Ascending aorta (tissue), 2 donors: ENCODE measurements at regions of chr19 and their contacts with region 1.

Region 1: GRCh38 chr19:6110360-6110977 is at the start of gene RFX2:
- DNase-seq: peak; percentile 98 to 100
- H3K4me3 ChIP-seq: peak within 1 kb of the TSS; percentile 95 to 97
- H3K27ac ChIP-seq: peak within 1 kb of the TSS; percentile 90 to 94
- H3K4me1 ChIP-seq: peaks cover 3 to 4% of the 10 kb centered on the region in 2 donors
- H3K27me3 ChIP-seq: no peaks in the 10 kb centered on the region
- CTCF ChIP-seq: no peak
- total RNA-seq, gene RFX2: 107 TPM

Region 2: DNA sequence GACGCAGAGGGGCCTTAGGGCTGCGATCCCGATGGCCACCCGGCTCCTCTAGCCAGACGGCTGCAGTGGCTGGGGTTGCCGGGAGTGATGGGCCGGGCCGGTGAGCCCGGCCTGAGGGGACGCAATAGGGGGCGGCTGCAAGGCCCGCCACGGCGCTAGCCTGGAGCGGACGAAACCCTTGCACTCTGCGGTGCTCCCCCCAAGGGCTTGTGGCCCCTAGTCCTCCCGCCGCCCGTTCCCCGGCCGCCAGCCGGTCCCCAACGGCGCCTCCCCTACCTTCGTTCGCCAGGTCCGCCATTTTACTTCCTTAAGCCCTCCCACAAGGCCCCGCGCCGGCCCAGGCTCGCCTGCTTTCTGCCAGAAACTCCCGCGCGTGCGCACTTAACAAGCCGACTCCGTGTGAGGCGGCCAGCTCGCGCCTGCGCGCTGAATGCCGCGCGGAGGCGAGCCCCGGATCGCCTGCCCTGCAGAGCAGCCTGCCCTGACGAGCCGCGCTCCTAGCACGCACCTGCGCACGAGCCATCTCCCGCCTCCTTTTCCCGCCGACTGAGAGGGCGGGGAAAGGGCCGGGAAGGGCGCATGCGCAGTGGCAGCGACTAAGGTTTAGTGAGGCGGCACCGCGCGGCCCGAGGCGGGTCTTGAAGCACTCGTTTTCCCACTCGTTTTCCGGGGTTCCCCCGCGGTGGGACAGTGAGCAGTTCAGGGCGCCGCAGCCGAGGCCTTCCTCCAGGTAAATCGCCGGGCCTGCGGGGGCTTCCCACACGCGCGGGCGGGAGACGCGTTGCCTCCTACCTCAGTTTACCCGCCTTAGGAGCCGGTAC is 132.5 kb before region 1 on chr19 and contains the start of gene RANBP3:
- intact Hi-C with region 1: loop called (anchors 5 kb)
- DNase-seq: peak; percentile 95 to 99
- H3K4me3 ChIP-seq: peak within 1 kb of the TSS; percentile 84 to 97
- H3K27ac ChIP-seq: peak within 1 kb of the TSS; percentile 87 to 96
- H3K4me1 ChIP-seq: peaks cover 18 to 35% of the 10 kb centered on the region in 2 donors
- H3K27me3 ChIP-seq: no peaks in the 10 kb centered on the region
- CTCF ChIP-seq: no peak
- total RNA-seq, gene RANBP3: 48.0 TPM

Region 3: DNA sequence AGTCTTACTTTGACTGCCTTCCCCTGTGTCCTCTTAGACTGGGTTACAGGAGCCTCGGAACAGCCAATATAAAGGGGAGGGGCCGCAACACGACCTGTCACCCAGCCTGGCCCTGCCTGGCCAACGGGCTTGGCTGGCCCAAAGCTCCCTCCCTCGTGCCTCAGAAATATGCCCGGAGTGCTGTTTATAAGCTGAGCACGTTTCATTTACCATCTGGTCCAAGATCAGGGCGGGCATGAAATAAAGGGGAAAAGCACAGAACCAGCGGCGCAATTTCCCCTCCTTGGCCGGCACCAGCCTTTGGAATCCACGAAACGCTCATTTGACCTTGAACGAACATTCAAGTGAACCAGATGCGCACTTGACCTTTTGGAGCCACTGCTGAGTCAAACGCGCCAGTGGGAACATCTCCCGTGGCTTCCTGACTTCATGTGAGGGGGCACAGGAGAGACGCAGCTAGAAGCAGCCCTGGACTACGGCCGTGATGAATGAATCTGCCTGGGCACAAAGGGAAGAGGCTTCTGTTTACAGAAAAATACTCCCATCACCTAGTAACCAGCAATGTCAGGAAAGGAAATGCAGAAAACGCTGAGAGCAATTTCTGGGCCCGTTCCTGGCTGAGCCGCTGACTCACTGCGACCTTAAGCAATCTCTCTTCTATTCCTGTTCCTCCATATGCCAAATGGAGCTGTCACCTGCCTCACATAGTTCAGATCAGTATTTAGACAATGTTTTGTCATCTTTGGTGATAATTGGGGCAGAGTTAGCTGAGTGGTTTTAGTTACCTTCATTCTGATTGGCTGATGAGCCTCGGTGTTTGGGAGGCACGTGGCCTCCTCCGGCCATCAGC is 53.4 kb before region 1 on chr19:
- intact Hi-C with region 1: loop called (anchors 1 kb)
- DNase-seq: peak; percentile 67 to 94
- H3K4me3 ChIP-seq: peak overlapping the region; percentile 28 to 47
- H3K27ac ChIP-seq: peak overlapping the region; percentile 93 to 96
- H3K4me1 ChIP-seq: peaks cover 15 to 55% of the 10 kb centered on the region in 2 donors
- H3K27me3 ChIP-seq: no peaks in the 10 kb centered on the region
- CTCF ChIP-seq: no peak

Region 4: GRCh38 chr19:6066661-6067646 is 43.5 kb before region 1 on chr19:
- intact Hi-C with region 1: loop called (anchors 2 kb)
- DNase-seq: peak; percentile 71 to 98
- H3K4me3 ChIP-seq: peak overlapping the region in 1 of 2 donors; percentile 5
- H3K27ac ChIP-seq: peak overlapping the region; percentile 76 to 85
- H3K4me1 ChIP-seq: peaks cover 17 to 75% of the 10 kb centered on the region in 2 donors
- H3K27me3 ChIP-seq: no peaks in the 10 kb centered on the region
- CTCF ChIP-seq: no peak

Region 5: GRCh38 chr19:6092329-6093286 is 17.9 kb before region 1 on chr19:
- intact Hi-C with region 1: loop called (anchors 2 kb)
- DNase-seq: peak; percentile 75 to 95
- H3K4me3 ChIP-seq: peak overlapping the region; percentile 6 to 59
- H3K27ac ChIP-seq: peak overlapping the region; percentile 88 to 92
- H3K4me1 ChIP-seq: peaks cover 18 to 35% of the 10 kb centered on the region in 2 donors
- H3K27me3 ChIP-seq: no peaks in the 10 kb centered on the region
- CTCF ChIP-seq: peak in 1 of 3 experiments; percentile 10

Region 6: DNA sequence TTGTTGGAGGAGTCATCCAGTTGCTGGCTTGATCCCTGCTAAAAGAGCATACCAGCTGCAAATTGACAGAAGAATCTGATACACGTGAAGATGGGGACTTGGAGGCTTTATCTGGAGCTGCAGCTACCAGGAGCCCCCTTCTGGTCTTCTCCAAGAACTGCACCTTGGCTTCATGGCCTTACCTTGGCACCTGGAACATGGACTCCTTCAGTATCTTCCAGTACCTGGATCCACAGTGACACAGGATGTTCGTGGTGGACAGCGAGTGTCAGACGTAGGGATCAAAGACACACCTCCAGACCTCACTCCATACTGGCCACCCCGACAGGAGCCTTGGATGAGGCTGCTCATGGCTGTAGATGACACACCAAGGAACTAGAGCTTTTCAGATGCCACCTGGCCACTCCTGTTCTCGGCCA is 15.1 kb after region 1 on chr19:
- intact Hi-C with region 1: loop called (anchors 1 kb)
- DNase-seq: peak in 1 of 2 donors; percentile 80
- H3K4me3 ChIP-seq: no peak overlapping the region
- H3K27ac ChIP-seq: no peak overlapping the region
- H3K4me1 ChIP-seq: no peaks in the 10 kb centered on the region
- H3K27me3 ChIP-seq: no peaks in the 10 kb centered on the region
- CTCF ChIP-seq: peak; percentile 90 to 98 (median 95)